Right cardiac atrium (tissue), 5 donors: ENCODE measurements at regions of chr7 and their contacts with region 1.

Region 1: GRCh38 chr7:18361756-18362155 is 133.8 kb upstream of the HDAC9 start:
- DNase-seq: peak in 1 of 3 donors; percentile 27
- ATAC-seq: no peak
- H3K4me3 ChIP-seq: no peak overlapping the region
- H3K27ac ChIP-seq: no peak overlapping the region
- H3K4me1 ChIP-seq: no peaks in the 10 kb centered on the region
- H3K27me3 ChIP-seq: no peaks in the 10 kb centered on the region

Region 2: DNA sequence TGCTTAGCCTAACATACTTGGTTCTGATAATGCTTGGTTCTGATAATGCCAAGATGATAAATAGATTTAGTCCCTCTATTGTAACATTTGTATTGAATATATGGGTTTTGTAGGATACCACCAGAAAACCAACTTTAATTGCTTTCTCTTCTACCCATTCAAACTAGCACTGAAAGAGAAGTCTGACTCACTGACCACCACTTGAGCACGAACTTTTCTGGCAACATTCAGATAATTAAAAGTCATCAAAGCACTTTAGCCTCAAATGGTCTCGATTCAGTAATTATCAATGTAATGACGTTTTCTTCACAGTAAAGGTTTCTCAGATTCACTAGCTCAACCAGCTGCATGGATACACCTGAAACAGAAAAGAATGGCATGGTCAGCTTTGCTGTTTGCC is 196.7 kb after region 1 on chr7:
- intact Hi-C with region 1: loop called in 1 of 4 experiments (anchors 5 kb)
- DNase-seq: no peak
- ATAC-seq: no peak
- H3K4me3 ChIP-seq: no peak overlapping the region
- H3K27ac ChIP-seq: no peak overlapping the region
- H3K4me1 ChIP-seq: no peaks in the 10 kb centered on the region
- H3K27me3 ChIP-seq: no peaks in the 10 kb centered on the region

Region 3: DNA sequence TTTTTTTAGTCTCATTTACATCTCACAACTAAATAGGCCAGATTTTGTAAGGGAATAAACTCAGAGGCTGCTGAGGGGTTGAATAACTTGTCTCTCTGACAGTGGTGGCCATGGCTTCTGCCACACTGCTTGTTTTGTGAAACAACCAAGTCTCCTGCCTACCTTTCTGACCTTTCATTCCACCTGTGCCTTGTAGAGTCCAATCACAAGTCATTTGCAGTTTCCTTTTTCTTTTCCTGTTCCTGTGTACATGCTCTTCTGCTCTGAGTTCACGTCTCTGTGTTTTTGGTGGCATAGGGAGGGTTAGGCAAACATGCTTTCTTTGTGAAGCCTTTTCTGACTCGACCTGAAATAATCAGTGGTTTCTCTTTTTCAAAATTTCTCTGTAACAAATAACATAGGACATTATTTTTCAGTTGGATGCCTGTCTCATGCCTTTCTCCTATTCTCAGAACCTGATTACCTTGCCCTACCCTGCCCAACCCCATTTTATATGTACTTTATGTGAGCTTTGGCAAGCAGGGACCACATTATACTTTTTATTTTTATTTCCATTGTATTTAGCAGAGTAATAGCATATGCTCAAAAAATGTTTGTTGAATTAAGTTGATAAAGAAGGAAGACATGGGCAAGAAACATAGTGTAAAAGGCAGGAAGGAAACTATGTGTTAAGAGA is 215.5 kb after region 1 on chr7:
- intact Hi-C with region 1: loop called in 2 of 4 experiments (anchors 5 kb)
- DNase-seq: no peak
- ATAC-seq: no peak
- H3K4me3 ChIP-seq: no peak overlapping the region
- H3K27ac ChIP-seq: no peak overlapping the region
- H3K4me1 ChIP-seq: no peaks in the 10 kb centered on the region
- H3K27me3 ChIP-seq: no peaks in the 10 kb centered on the region

Region 4: GRCh38 chr7:18666107-18666728 is 304.5 kb after region 1 on chr7:
- intact Hi-C with region 1: loop called in 3 of 4 experiments (anchors 10 kb)
- DNase-seq: peak; percentile 78 to 88 (median 85)
- ATAC-seq: peak; percentile 87 to 91
- H3K4me3 ChIP-seq: no peak overlapping the region
- H3K27ac ChIP-seq: no peak overlapping the region
- H3K4me1 ChIP-seq: no peaks in the 10 kb centered on the region
- H3K27me3 ChIP-seq: no peaks in the 10 kb centered on the region